CD8-positive, alpha-beta T cell (primary cell): ENCODE measurements at regions of chr3 and their contacts with region 1.

Region 1: DNA sequence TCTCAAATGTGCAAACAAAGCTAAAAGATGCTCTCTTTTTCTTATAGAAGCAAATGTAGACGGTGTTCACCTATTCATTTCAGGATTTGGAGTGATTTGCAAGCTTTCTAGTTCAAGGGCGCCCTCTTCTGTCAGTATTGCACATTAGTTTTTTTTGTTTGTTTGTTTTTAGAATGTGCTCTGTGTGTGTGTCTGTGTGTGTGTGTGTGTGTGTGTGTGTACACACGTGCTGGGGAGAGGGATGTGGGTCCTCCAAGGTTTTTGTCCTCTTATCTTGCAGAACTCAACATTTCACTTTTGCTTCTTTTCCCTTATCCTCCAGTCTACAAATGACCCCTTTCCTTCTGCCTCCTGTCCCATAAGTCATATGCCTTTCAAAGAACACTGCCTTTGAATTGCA is 23.5 kb downstream of the DNAH1 start:
- DNase-seq: peak in 8 of 9 experiments; percentile 16 to 85 (median 54)
- ATAC-seq: peak; percentile 90
- H3K4me3 ChIP-seq: no peak overlapping the region
- H3K4me3 Mint-ChIP-seq: no peak overlapping the region
- H3K27ac ChIP-seq: no peak overlapping the region
- H3K27ac Mint-ChIP-seq: no peak overlapping the region
- H3K4me1 ChIP-seq: no peaks in the 10 kb centered on the region
- H3K4me1 Mint-ChIP-seq: peaks cover 5% of the 10 kb centered on the region
- H3K27me3 ChIP-seq: no peaks in the 10 kb centered on the region
- H3K27me3 Mint-ChIP-seq: no peaks in the 10 kb centered on the region
- CTCF ChIP-seq: peak; percentile 93

Region 2: DNA sequence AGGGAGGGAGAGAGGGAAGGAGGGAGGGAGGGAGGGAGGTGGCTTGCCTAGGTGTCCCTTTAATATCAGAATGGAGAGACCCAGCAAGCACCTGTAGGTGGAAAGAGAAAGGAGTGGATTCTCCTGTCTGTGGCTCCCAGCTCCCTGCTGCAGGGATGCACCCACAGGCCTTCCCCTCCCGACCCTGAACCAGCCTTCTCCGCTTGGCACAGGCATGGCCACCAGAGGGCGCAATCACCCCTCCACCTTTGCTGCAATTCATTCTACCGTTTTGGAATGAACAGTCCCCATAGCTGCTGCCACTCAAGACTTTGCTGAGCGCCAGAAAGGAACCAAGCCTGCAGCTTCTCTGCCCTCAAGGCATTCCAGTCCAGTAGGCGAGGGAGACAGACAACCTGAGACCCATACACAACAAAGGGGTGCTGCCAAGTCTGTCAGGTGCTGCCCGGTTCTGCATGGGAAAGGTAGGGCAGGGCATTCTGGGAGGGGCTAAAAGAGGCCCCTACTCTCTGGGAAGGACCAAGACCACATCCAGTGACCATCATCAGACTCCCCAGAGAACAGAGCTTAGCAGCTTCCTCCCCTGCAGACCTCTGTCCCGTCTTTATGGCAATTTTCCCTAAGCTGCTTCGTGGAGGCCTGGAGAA is 119.1 kb before region 1 on chr3:
- CTCF ChIA-PET with region 1: interaction called, 263 read pairs
- POLR2A ChIA-PET with region 1: interaction called, 8 read pairs
- intact Hi-C with region 1: loop called (anchors 1 kb)
- DNase-seq: peak; percentile 75 to 96 (median 86)
- ATAC-seq: peak; percentile 58
- H3K4me3 ChIP-seq: no peak overlapping the region
- H3K4me3 Mint-ChIP-seq: peak overlapping the region; percentile 65
- H3K27ac ChIP-seq: no peak overlapping the region
- H3K27ac Mint-ChIP-seq: peak overlapping the region; percentile 70
- H3K4me1 ChIP-seq: peaks cover 92% of the 10 kb centered on the region
- H3K4me1 Mint-ChIP-seq: peaks cover 85% of the 10 kb centered on the region
- H3K27me3 ChIP-seq: no peaks in the 10 kb centered on the region
- H3K27me3 Mint-ChIP-seq: no peaks in the 10 kb centered on the region
- CTCF ChIP-seq: peak; percentile 70

Region 3: DNA sequence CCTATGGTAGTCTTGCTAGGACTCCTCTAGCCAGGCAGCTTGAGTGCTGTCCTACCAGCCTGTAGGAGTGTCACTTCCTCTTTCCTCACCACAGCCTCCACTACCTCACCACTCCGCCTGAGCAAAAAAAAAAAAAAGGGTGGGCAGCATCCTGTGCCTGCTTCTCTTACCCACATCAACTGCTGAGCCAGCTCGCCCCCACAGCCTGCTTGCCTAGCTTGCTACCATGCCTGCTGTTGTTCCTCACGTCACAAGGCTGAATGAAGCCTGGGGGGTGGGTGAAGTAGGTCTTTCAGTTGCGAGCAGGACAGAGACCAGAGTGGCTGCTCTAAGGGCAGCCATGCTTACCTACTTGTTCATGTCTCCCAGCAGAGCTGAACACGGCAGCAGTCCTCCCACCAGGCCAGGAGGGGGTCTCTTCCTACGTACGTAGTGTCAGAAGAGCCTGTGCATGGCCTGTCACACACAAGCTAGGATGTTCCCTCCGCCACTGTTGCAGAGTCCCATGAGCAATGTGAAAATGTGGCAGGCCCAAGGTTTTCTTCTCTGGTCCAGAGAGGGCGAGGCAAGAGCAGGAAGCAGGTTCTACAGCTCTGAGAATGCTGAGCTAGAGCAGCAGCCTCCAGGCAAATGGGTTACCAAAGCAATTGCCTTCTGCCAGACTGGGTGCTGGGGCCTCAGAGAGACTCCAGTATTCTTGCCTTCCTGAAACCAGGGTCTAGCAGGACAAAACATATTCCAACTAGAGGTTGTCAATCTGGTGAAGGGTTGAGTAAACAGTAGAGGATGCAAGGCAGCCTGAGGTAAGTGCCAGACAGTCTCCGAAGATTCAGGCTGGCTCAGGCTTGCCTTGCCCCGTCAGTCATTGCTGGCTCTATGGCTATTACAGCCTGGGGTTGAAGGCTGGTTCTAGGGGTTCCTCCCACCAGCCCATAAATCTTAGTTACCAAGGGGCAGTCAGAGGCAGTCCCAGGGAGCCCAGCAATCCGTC is 86.0 kb before region 1 on chr3:
- CTCF ChIA-PET with region 1: interaction called, 13 read pairs
- POLR2A ChIA-PET with region 1: no interaction called
- intact Hi-C with region 1: no loop called
- DNase-seq: peak; percentile 70 to 97 (median 87)
- ATAC-seq: peak; percentile 86
- H3K4me3 ChIP-seq: peak overlapping the region; percentile 25 to 32
- H3K4me3 Mint-ChIP-seq: peak overlapping the region; percentile 84
- H3K27ac ChIP-seq: peak overlapping the region; percentile 76 to 92
- H3K27ac Mint-ChIP-seq: peak overlapping the region; percentile 100
- H3K4me1 ChIP-seq: peaks cover 96% of the 10 kb centered on the region
- H3K4me1 Mint-ChIP-seq: peaks cover 93% of the 10 kb centered on the region
- H3K27me3 ChIP-seq: no peaks in the 10 kb centered on the region
- H3K27me3 Mint-ChIP-seq: no peaks in the 10 kb centered on the region
- CTCF ChIP-seq: no peak

Region 4: DNA sequence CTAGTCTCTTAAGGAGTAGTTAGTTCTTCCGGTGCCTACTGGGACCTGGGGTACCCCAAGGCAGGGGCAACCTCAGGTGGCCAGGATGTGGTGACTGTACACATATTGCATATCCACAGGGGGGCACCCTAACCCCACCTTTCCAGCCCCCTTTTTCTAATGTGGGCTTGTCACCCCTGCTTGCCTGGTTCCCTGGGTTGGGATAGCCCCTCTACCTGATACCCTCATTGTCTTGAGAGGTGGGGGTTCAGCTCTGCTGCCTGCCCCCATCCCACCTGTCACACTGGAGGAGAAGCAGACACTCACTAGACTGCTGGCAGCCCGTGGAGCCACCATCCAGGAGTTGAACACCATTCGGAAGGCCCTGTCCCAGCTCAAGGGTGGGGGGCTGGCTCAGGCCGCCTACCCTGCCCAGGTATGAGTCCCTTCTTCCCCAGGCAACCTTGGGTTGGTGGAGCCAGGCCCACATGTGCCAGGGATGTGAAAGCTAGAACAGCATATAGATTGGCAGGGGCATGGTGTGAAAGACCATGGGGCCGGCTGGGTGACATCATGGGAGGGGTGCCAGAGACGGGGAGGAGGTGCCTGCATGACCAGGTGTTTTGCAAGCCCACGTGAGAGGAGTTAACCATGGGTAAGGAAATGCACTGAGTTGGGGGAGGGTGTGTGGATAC is 48.0 kb before region 1 on chr3:
- CTCF ChIA-PET with region 1: interaction called, 99 read pairs
- POLR2A ChIA-PET with region 1: interaction called, 4 read pairs
- intact Hi-C with region 1: loop called (anchors 1 kb)
- DNase-seq: peak in 7 of 9 experiments; percentile 33 to 70 (median 60)
- ATAC-seq: peak; percentile 32
- H3K4me3 ChIP-seq: no peak overlapping the region
- H3K4me3 Mint-ChIP-seq: peak overlapping the region; percentile 37
- H3K27ac ChIP-seq: no peak overlapping the region
- H3K27ac Mint-ChIP-seq: no peak overlapping the region
- H3K4me1 ChIP-seq: peaks cover 33% of the 10 kb centered on the region
- H3K4me1 Mint-ChIP-seq: peaks cover 37% of the 10 kb centered on the region
- H3K27me3 ChIP-seq: no peaks in the 10 kb centered on the region
- H3K27me3 Mint-ChIP-seq: no peaks in the 10 kb centered on the region
- CTCF ChIP-seq: peak; percentile 49

Region 5: DNA sequence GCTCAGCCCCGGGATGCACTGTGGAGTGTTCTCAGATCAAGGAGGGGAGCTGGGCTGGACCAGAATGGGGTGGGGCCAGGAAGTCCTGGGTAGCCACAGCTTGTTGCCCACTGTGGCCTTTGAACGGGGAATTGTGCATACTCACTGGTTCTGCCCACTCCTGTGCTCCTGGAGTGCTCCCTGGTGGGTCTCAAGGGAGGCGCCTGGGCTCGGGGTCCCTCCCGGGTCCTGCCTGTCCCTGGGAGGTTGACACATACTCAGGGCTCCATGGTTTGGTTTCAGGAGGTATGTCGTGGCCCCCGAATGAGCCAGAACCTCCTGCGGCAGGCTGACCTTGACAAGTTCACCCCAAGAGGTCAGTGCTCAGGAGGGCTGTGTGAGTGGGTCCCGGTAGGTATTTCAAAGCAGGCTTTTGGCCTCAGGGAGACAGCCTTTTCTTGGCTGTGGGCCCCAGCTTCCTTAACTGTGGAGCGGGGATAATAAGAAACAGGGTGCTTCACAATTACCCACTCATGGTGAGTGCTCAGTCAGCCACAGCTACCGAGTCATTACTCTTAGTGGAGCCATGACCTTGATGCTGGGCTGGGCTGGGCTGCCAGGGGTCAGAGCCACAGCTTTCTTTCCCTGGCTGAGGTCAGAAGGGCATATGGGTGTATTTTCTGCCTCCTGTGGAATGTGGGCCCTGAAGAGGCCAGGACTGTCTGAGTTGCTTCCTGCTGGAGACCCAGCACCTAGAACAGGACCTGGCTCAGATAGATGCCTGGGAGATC is 15.9 kb before region 1 on chr3:
- CTCF ChIA-PET with region 1: interaction called, 17 read pairs
- POLR2A ChIA-PET with region 1: no interaction called
- intact Hi-C with region 1: no loop called
- DNase-seq: no peak
- ATAC-seq: no peak
- H3K4me3 ChIP-seq: no peak overlapping the region
- H3K4me3 Mint-ChIP-seq: no peak overlapping the region
- H3K27ac ChIP-seq: no peak overlapping the region
- H3K27ac Mint-ChIP-seq: no peak overlapping the region
- H3K4me1 ChIP-seq: no peaks in the 10 kb centered on the region
- H3K4me1 Mint-ChIP-seq: no peaks in the 10 kb centered on the region
- H3K27me3 ChIP-seq: no peaks in the 10 kb centered on the region
- H3K27me3 Mint-ChIP-seq: no peaks in the 10 kb centered on the region
- CTCF ChIP-seq: no peak